Gastrocnemius medialis (tissue), 4 donors: ENCODE measurements at regions of chr1 and their contacts with region 1.

Region 1: GRCh38 chr1:41516168-41517061 is 31.9 kb upstream of the EDN2 start:
- DNase-seq: peak; percentile 72 to 89
- ATAC-seq: peak; percentile 92 to 93
- H3K4me3 ChIP-seq: peak overlapping the region; percentile 60 to 76 (median 66)
- H3K27ac ChIP-seq: peak overlapping the region; percentile 56 to 73 (median 66)
- H3K4me1 ChIP-seq: peaks cover 17 to 24% of the 10 kb centered on the region in 2 donors
- H3K27me3 ChIP-seq: no peaks in the 10 kb centered on the region
- CTCF ChIP-seq: peak; percentile 85 to 97 (median 93)
- POLR2A ChIP-seq: peak in 1 of 2 donors; percentile 35

Region 2: GRCh38 chr1:41268154-41268770 is 248.2 kb before region 1 on chr1:
- in situ Hi-C with region 1: no loop called
- intact Hi-C with region 1: loop called (anchors 1 kb)
- DNase-seq: peak; percentile 45 to 71
- ATAC-seq: peak; percentile 76 to 90
- H3K4me3 ChIP-seq: no peak overlapping the region
- H3K27ac ChIP-seq: no peak overlapping the region
- H3K4me1 ChIP-seq: peaks cover 0 to 3% of the 10 kb centered on the region in 2 donors
- H3K27me3 ChIP-seq: no peaks in the 10 kb centered on the region
- CTCF ChIP-seq: peak; percentile 90 to 99 (median 95)
- POLR2A ChIP-seq: no peak

Region 3: DNA sequence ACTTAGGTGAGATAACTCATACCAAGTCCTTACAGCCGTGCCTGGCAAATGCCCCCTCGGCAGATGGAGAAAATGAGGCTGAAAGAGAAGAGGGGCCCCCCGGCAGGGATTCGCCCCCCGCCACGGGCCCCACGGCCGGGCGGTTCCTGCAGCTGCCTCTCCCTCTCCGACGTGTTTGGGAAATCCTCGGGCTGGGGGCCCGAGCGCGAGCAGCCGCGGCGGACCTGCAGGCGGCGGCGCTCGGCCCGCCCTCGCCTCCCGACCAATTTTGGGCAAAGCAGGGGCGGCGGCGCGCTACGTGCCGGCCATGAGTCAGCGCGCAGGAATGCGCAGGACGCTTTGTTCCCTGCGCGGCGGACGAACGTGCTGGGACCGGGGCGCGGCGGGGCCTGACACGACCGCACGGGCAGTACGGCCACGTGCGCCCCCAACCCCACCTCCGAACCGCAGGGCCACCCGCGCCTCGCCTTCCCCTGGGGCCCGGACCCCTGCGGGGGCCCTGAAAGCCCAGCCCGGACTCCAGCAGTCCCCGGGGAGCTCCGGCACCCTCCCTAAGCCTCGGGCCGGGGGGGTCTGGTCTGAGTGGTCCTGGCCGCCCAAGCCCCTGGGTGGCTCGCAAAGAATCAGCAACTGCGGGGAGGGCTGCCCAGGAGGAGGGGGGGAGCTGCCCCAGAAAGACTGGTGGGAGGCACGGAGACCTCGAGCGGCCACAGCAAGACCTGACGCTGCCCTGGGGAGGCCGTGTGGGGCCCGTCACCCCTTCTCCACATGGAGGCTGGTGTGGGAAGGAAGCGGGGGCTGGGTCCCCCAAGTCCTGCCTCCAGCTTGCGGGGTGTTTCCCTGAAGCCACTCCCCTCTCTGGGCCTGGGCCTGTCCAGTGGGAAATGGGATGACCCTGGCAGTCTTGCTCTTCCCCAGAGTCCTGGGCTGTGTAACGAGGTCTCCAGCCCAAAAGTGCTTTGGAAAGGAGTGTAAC is 20.0 kb before region 1 on chr1:
- in situ Hi-C with region 1: no loop called
- intact Hi-C with region 1: loop called (anchors 2 kb)
- DNase-seq: peak; percentile 90 to 94
- ATAC-seq: peak; percentile 55 to 63
- H3K4me3 ChIP-seq: peak overlapping the region; percentile 38 to 54 (median 42)
- H3K27ac ChIP-seq: peak overlapping the region; percentile 88 to 93 (median 90)
- H3K4me1 ChIP-seq: peaks cover 48 to 49% of the 10 kb centered on the region in 2 donors
- H3K27me3 ChIP-seq: no peaks in the 10 kb centered on the region
- CTCF ChIP-seq: peak in 3 of 5 experiments; percentile 14 to 49 (median 42)
- POLR2A ChIP-seq: peak; percentile 81 to 83

Region 4: GRCh38 chr1:41537788-41538351 is 21.5 kb after region 1 on chr1:
- in situ Hi-C with region 1: no loop called
- intact Hi-C with region 1: loop called (anchors 1 kb)
- DNase-seq: peak; percentile 80 to 89
- ATAC-seq: peak; percentile 88 to 97
- H3K4me3 ChIP-seq: no peak overlapping the region
- H3K27ac ChIP-seq: peak overlapping the region; percentile 56 to 86 (median 74)
- H3K4me1 ChIP-seq: peaks cover 25 to 29% of the 10 kb centered on the region in 2 donors
- H3K27me3 ChIP-seq: no peaks in the 10 kb centered on the region
- CTCF ChIP-seq: no peak
- POLR2A ChIP-seq: no peak

Region 5: GRCh38 chr1:41573785-41574713 is 57.6 kb after region 1 on chr1:
- in situ Hi-C with region 1: no loop called
- intact Hi-C with region 1: loop called (anchors 1 kb)
- DNase-seq: peak; percentile 48 to 71
- ATAC-seq: peak; percentile 88 to 95
- H3K4me3 ChIP-seq: no peak overlapping the region
- H3K27ac ChIP-seq: no peak overlapping the region
- H3K4me1 ChIP-seq: peaks cover 3 to 7% of the 10 kb centered on the region in 2 donors
- H3K27me3 ChIP-seq: no peaks in the 10 kb centered on the region
- CTCF ChIP-seq: peak; percentile 79 to 91 (median 84)
- POLR2A ChIP-seq: no peak

Region 6: GRCh38 chr1:41622859-41623723 is 106.7 kb after region 1 on chr1:
- in situ Hi-C with region 1: no loop called
- intact Hi-C with region 1: no loop called
- DNase-seq: no peak
- ATAC-seq: no peak
- H3K4me3 ChIP-seq: no peak overlapping the region
- H3K27ac ChIP-seq: no peak overlapping the region
- H3K4me1 ChIP-seq: peaks cover 14 to 15% of the 10 kb centered on the region in 2 donors
- H3K27me3 ChIP-seq: no peaks in the 10 kb centered on the region
- CTCF ChIP-seq: no peak
- POLR2A ChIP-seq: no peak

Region 7: DNA sequence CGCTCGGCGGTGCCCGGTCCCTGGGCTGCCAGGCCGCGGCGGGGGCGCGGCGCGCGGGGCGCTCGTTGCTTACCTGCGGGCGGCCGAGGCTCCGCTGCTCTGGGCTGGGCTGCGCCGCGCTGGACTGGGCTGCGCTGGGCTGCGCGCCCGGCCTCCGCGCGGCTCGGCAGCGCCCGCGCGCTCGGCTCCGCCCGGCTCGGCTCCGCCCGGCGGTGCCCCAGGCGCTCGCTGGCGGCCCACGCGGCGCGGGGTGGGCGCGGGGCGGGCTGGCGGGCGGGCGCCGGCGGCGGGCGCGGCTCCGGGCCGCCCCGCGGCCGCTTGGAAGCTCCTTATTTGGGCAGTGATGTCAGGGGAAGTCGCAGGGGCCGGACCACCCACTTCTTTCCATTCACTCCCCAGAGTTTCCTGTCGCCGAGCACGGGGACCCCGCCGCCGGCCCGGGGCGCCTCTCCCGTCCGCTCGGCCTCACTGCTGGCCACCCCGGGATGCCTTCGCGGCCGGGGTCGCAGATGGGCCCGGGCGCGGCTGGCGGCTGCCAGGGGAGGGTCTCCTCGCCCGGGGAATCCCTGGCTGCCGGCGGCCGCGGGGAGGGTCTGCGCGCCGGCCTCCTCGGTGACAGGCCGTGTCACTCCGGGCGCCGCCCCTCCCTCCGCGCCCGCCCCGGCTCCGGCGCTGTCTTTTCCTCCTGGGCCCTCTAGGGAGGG is 145.8 kb after region 1 on chr1:
- in situ Hi-C with region 1: no loop called
- intact Hi-C with region 1: loop called (anchors 5 kb)
- DNase-seq: peak in 1 of 2 donors; percentile 43
- ATAC-seq: peak; percentile 63 to 66
- H3K4me3 ChIP-seq: peak overlapping the region; percentile 60 to 74 (median 62)
- H3K27ac ChIP-seq: peak overlapping the region; percentile 80 to 88 (median 84)
- H3K4me1 ChIP-seq: peaks cover 14 to 27% of the 10 kb centered on the region in 2 donors
- H3K27me3 ChIP-seq: no peaks in the 10 kb centered on the region
- CTCF ChIP-seq: no peak
- POLR2A ChIP-seq: peak; percentile 61 to 76

Region 8: DNA sequence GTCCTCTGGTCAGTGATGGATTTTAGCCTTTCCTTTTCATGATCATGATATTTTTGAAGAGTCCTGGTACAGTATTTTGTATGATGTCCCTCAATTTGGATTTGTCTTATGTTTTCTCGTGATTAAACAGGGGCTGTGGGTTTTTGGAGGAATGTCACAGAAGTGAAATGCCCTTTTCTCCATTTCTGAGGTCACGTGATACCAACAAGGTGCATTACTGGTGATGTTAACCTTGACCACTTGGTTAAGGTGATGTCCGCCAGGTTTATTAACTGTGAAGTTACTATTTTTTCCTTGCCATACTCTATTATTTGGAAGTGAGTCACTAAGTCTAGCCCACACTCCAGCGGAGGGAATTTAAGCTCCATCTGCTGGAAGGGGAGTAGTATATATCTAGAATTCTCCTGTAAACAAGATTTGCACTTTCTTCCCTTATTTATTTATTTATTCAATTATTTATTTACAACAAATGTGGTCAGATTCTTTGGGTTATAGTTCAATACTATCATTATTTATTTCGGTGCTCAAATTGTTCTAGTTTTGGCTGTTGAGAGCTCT is 278.9 kb after region 1 on chr1:
- in situ Hi-C with region 1: no loop called
- intact Hi-C with region 1: loop called (anchors 5 kb)
- DNase-seq: no peak
- ATAC-seq: peak in 1 of 2 donors; percentile 81
- H3K4me3 ChIP-seq: no peak overlapping the region
- H3K27ac ChIP-seq: no peak overlapping the region
- H3K4me1 ChIP-seq: no peaks in the 10 kb centered on the region
- H3K27me3 ChIP-seq: no peaks in the 10 kb centered on the region
- CTCF ChIP-seq: peak; percentile 16 to 50 (median 31)
- POLR2A ChIP-seq: no peak